ENCODE measurements at regions of chr11 and their contacts with region 1.

Region 1: DNA sequence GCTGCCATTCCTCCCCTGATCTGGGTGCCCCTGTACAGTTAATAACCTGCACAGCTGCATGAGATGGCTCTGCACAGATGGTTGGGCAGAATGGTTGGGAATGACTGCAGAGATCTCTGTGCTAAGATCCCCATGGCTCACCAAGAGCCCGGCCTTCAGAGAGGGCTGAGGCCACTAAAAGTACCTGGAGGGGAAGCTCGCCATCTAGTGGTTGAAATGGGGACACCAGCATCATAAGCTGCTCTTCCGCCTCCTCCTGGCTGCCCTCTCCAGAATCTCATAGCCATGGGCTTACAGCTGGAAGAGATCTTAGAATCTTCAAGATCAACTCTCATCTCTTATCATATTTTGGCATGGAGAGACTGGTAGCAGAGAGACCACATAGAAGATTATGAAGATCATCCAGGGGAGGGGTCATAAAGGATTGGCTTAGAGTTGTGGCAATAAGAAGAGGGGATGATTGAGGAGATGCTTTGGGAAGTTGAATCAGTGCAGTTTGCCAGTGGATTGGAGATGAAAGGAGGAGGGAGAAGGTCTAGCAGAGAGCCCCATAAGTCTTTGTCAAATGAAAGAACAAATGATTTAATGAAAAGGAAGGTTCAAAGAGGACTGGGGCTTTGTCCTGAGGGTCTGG is 22.0 kb upstream of the TLCD5 start:
- DNase-seq: peak; percentile 60 to 68
- ATAC-seq: peak; percentile 67 to 88 (median 81)
- H3K4me3 ChIP-seq: no peak overlapping the region
- H3K27ac ChIP-seq: no peak overlapping the region
- H3K4me1 ChIP-seq: no peaks in the 10 kb centered on the region
- H3K27me3 ChIP-seq: no peaks in the 10 kb centered on the region
- CTCF ChIP-seq: peak; percentile 55

Region 2: DNA sequence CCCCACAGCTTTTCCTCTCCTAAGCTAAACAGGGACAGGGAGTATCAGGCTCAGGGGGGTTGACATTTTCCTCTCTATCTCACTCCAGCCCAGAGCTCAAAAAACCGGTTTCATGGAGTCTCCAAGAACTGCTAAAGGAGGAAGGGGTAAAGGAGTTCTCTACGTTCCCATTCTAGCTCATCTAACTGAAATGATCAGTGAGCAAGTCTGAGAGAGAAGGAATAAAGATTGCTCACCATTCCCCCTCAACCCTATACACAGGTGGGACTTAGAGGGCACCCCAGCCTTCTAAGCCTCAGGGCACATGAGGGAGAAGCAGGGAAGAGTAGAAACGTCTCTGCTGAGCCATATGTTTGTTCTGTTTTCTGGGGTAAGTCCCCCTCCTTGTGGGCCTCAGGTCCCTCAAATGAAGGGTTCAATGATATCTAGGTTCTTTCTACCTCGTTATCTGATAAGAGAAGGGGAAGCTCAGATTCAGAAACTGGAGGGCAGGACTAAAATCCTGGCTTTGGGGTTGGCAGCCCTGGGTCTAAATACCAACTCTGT is 66.5 kb before region 1 on chr11:
- intact Hi-C with region 1: loop called (anchors 2 kb)
- DNase-seq: no peak
- ATAC-seq: no peak
- H3K4me3 ChIP-seq: no peak overlapping the region
- H3K27ac ChIP-seq: no peak overlapping the region
- H3K4me1 ChIP-seq: no peaks in the 10 kb centered on the region
- H3K27me3 ChIP-seq: peaks cover 0 to 39% (median 5%) of the 10 kb centered on the region in 3 donors
- CTCF ChIP-seq: no peak

Measured in psoas muscle (tissue), 8 donors.